AG04450 (cell line): ENCODE measurements at regions of chr2 and their contacts with region 1.

Region 1: GRCh38 chr2:187499941-187500532 is 52.0 kb upstream of the CALCRL start:
- DNase-seq: peak; percentile 29
- H3K4me3 ChIP-seq: no peak overlapping the region
- H3K27ac ChIP-seq: no peak overlapping the region
- H3K27me3 ChIP-seq: no peaks in the 10 kb centered on the region
- CTCF ChIP-seq: peak; percentile 90

Region 2: DNA sequence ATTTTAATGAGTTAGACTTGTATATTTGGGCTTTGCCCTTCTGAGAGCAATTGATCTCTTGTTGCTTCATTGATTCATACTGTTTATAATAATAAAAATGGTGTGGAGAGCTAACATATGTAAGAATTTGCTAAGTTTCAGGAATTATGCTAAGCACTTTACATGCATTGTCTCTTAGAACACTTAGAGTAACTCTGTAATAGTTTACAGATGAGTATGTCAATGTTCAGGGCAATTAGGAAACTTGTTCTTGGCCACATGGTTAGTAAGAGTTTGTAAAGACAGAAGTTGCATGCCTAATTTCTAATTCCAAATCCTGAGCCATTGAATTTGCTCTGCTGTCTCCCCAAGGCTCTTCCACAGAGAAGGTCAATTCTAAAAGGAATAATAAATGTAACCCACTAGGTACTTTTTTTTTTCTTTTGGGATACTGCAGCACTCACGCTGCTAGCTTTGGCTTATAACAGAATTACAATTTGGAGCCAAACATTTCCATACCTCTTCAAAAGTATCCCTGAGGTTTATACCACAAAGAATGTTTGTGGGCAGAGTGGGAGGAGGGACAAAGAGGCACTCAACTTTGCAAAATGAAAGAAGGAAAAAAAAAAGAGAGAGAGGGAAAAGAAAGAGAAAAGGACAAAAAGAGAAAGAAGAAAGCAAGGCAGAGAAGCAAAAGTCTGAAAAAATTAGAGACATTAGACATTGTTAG is 284.4 kb before region 1 on chr2:
- CTCF ChIA-PET with region 1: no interaction called
- POLR2A ChIA-PET with region 1: no interaction called
- DNase-seq: no peak
- H3K4me3 ChIP-seq: no peak overlapping the region
- H3K27ac ChIP-seq: no peak overlapping the region
- H3K27me3 ChIP-seq: no peaks in the 10 kb centered on the region
- CTCF ChIP-seq: no peak

Region 3: GRCh38 chr2:187519419-187520120 is 19.5 kb after region 1 on chr2:
- CTCF ChIA-PET with region 1: interaction called, 11 read pairs
- POLR2A ChIA-PET with region 1: no interaction called
- DNase-seq: no peak
- H3K4me3 ChIP-seq: no peak overlapping the region
- H3K27ac ChIP-seq: no peak overlapping the region
- H3K27me3 ChIP-seq: no peaks in the 10 kb centered on the region
- CTCF ChIP-seq: no peak

Region 4: GRCh38 chr2:187547353-187547979 is 47.4 kb after region 1 on chr2:
- CTCF ChIA-PET with region 1: interaction called, 32 read pairs
- POLR2A ChIA-PET with region 1: interaction called, 6 read pairs
- DNase-seq: peak; percentile 81
- H3K4me3 ChIP-seq: no peak overlapping the region
- H3K27ac ChIP-seq: no peak overlapping the region
- H3K27me3 ChIP-seq: no peaks in the 10 kb centered on the region
- CTCF ChIP-seq: no peak

Region 5: GRCh38 chr2:187574969-187575750 is 75.1 kb after region 1 on chr2:
- CTCF ChIA-PET with region 1: interaction called, 792 read pairs
- POLR2A ChIA-PET with region 1: no interaction called
- DNase-seq: peak; percentile 37
- H3K4me3 ChIP-seq: no peak overlapping the region
- H3K27ac ChIP-seq: no peak overlapping the region
- H3K27me3 ChIP-seq: no peaks in the 10 kb centered on the region
- CTCF ChIP-seq: no peak

Region 6: DNA sequence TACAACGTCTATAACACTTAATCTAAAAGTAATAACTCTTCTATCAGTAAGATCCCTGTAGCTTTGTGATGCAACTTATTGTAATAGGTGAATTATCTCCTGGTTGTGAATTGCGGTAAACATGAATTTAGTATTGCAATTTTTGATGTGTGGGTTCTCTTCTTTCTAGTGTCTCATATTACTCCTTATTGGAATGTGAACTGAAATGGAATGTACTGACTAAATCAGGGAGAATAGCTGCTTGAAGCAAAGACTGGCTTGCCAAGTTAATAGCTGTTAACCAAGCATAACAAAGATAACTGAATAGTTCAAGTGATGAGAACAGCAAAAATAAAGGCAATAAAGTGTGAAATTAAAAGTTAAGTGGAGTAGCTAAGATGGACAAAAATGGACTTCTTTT is 114.7 kb after region 1 on chr2:
- CTCF ChIA-PET with region 1: interaction called, 21 read pairs
- POLR2A ChIA-PET with region 1: no interaction called
- DNase-seq: no peak
- H3K4me3 ChIP-seq: no peak overlapping the region
- H3K27ac ChIP-seq: no peak overlapping the region
- H3K27me3 ChIP-seq: no peaks in the 10 kb centered on the region
- CTCF ChIP-seq: no peak

Region 7: DNA sequence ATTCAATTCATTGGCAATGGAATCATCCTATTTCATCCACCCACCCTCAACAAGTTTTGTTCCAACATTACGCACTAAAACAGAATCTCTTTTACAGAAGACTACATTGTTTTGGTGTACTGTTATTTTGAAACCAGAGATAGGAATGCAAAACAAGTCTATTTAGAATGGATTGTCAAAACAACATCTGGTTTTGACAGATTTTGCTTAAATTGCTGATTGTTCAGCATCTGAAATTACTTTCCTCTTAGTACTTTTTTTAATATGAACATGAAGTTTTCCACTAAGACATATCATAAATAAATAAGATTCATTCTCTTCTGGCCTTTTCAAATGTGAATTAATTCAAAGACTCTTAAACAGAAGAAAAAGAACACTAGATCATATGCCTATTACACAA is 378.1 kb after region 1 on chr2:
- CTCF ChIA-PET with region 1: no interaction called
- POLR2A ChIA-PET with region 1: no interaction called
- DNase-seq: no peak
- H3K4me3 ChIP-seq: no peak overlapping the region
- H3K27ac ChIP-seq: no peak overlapping the region
- H3K27me3 ChIP-seq: no peaks in the 10 kb centered on the region
- CTCF ChIP-seq: no peak